CD8-positive, alpha-beta memory T cell (primary cell): ENCODE measurements at regions of chr12 and their contacts with region 1.

Region 1: GRCh38 chr12:64890873-64891468 is 66.5 kb downstream of the TBC1D30 start:
- DNase-seq: peak in 2 of 5 donors; percentile 29 to 47
- H3K4me3 ChIP-seq: no peak overlapping the region
- H3K4me3 Mint-ChIP-seq: no peak overlapping the region
- H3K27ac ChIP-seq: no peak overlapping the region
- H3K27ac Mint-ChIP-seq: no peak overlapping the region
- H3K4me1 ChIP-seq: no peaks in the 10 kb centered on the region
- H3K4me1 Mint-ChIP-seq: no peaks in the 10 kb centered on the region
- H3K27me3 ChIP-seq: no peaks in the 10 kb centered on the region
- H3K27me3 Mint-ChIP-seq: peaks cover 8 to 43% of the 10 kb centered on the region in 2 donors

Region 2: DNA sequence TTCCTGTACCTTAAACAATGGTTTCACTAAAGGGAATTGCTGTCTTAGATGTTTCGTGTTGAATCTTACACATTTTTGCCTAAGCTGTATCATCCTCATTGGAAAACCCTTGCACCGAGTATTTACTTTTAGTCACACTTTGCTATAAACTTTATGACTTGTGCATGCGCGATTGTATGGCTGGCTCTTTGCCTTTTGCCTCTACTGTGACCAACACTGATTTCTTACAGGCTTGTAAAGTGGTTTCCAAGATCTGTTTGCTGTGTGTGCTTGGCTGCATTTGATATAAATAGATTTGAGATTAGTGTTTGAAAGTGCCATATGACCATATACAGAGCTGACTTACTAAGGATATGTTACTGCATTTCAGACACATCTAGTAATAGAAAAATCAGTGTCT is 240.2 kb before region 1 on chr12:
- CTCF ChIA-PET with region 1: no interaction called
- POLR2A ChIA-PET with region 1: no interaction called
- DNase-seq: no peak
- H3K4me3 ChIP-seq: no peak overlapping the region
- H3K4me3 Mint-ChIP-seq: peak overlapping the region in 3 of 7 donors; percentile 6 to 32 (median 32)
- H3K27ac ChIP-seq: no peak overlapping the region
- H3K27ac Mint-ChIP-seq: peak overlapping the region; percentile 2 to 92 (median 44)
- H3K4me1 ChIP-seq: peaks cover 64% of the 10 kb centered on the region
- H3K4me1 Mint-ChIP-seq: peaks cover 68 to 87% (median 83%) of the 10 kb centered on the region in 3 donors
- H3K27me3 ChIP-seq: no peaks in the 10 kb centered on the region
- H3K27me3 Mint-ChIP-seq: no peaks in the 10 kb centered on the region

Region 3: DNA sequence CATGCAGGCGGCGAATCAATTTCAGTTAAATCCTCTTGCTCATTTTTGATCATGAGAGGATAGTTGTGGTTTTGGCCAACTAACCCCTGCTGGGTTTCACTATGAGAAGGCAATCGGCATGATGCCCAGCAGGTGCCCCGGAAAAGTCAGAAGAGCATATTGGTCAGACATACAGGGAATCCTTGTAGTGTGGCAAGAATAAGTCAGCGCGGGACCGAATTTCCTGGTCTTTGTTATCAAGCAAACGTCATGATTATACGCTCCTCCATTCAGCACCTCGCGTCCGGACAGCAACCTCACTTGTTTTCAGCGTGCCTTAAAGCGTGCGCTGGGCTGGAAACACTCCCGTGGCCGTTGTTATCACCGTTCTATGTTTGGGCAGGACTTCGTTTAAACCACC is 64.7 kb before region 1 on chr12:
- CTCF ChIA-PET with region 1: no interaction called
- POLR2A ChIA-PET with region 1: no interaction called
- DNase-seq: peak in 3 of 5 donors; percentile 16 to 57 (median 25)
- H3K4me3 ChIP-seq: no peak overlapping the region
- H3K4me3 Mint-ChIP-seq: peak overlapping the region; percentile 25 to 69 (median 37)
- H3K27ac ChIP-seq: no peak overlapping the region
- H3K27ac Mint-ChIP-seq: peak overlapping the region in 1 of 8 donors; percentile 22
- H3K4me1 ChIP-seq: peaks cover 15% of the 10 kb centered on the region
- H3K4me1 Mint-ChIP-seq: peaks cover 17 to 25% (median 20%) of the 10 kb centered on the region in 3 donors
- H3K27me3 ChIP-seq: peaks cover 36% of the 10 kb centered on the region
- H3K27me3 Mint-ChIP-seq: peaks cover 44 to 72% of the 10 kb centered on the region in 2 donors

Region 4: GRCh38 chr12:66107451-66107915 is 1216.5 kb after region 1 on chr12:
- CTCF ChIA-PET with region 1: interaction called, 26 read pairs
- POLR2A ChIA-PET with region 1: no interaction called
- DNase-seq: peak; percentile 7 to 67 (median 60)
- H3K4me3 ChIP-seq: no peak overlapping the region
- H3K4me3 Mint-ChIP-seq: no peak overlapping the region
- H3K27ac ChIP-seq: no peak overlapping the region
- H3K27ac Mint-ChIP-seq: no peak overlapping the region
- H3K4me1 ChIP-seq: no peaks in the 10 kb centered on the region
- H3K4me1 Mint-ChIP-seq: peaks cover 3 to 6% (median 4%) of the 10 kb centered on the region in 3 donors
- H3K27me3 ChIP-seq: no peaks in the 10 kb centered on the region
- H3K27me3 Mint-ChIP-seq: peaks cover 6 to 32% of the 10 kb centered on the region in 2 donors